A549 (cell line): ENCODE measurements at regions of chr11 and their contacts with region 1.

Region 1: GRCh38 chr11:69909561-69910496 is 90.6 kb upstream of the FGF3 start:
- DNase-seq: no peak
- ATAC-seq: peak in 1 of 2 experiments; percentile 68; a peak in 3 of 6 replicates
- H3K4me3 ChIP-seq: no peak overlapping the region
- H3K27ac ChIP-seq: peak overlapping the region in 1 of 2 experiments; percentile 23; a peak in 1 of 6 replicates
- H3K4me1 ChIP-seq: peaks cover 20% of the 10 kb centered on the region
- CTCF ChIP-seq: peak; percentile 84
- EP300 ChIP-seq: no peak
- POLR2A ChIP-seq: no peak
- RAD21 ChIP-seq: peak; percentile 32; a peak in 3 of 5 replicates

Region 2: DNA sequence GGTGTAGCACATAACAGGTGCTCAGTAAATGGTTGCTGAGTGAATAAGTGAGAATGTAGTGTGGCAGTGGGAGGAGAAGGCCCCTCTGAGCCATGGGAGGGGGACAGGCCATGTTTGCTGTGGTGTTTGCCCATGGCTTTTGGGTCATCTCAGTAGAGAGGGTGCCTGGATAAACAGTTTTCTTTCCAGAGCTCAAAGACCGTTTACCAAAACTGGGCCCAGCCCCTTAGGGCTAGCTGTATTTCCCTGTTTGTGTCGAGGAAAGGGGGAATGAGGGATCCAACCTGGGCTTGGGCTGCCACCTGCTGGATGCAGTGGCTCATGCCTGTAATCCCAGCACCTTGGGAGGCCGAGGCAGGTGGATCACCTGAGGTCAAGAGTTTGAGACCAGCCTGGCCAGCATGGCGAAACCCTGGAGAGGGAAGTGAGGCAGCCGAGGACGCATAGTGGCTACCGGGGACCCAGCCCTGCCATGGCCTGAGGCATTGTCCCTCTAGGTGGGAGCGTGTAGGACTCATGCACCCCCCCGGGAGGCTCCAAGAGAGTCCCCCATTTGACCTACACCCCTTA is 226.0 kb before region 1 on chr11:
- CTCF ChIA-PET with region 1: interaction called, 38 read pairs
- POLR2A ChIA-PET with region 1: no interaction called
- DNase-seq: peak in 1 of 2 experiments; percentile 64
- ATAC-seq: peak in 1 of 2 experiments; percentile 75; a peak in 3 of 6 replicates
- H3K4me3 ChIP-seq: no peak overlapping the region
- H3K27ac ChIP-seq: no peak overlapping the region
- H3K4me1 ChIP-seq: peaks cover 12% of the 10 kb centered on the region; the same call in 2 of the 3 replicates
- CTCF ChIP-seq: peak; percentile 66
- EP300 ChIP-seq: no peak
- POLR2A ChIP-seq: no peak
- RAD21 ChIP-seq: peak; percentile 77 to 89

Region 3: DNA sequence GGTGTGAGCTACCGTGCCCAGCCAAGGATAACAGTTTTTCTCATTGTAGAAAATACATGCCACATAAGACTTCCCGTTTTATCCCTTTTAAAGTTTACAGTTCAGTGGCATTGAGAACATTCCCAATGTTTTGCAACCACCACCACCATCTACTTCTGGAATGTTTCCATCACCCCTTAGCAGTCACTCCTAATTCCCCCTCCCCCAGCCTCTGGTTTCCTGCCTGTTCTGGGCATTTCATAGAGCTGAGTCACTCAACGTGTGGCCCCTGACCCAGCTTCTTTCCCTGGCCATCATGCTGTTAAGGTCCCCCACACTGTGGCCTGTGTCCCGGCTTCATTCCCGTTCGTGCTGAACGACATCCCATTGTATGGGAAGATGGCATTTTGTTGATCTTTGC is 165.4 kb before region 1 on chr11:
- CTCF ChIA-PET with region 1: no interaction called
- POLR2A ChIA-PET with region 1: no interaction called
- DNase-seq: peak in 1 of 2 experiments; percentile 16
- ATAC-seq: peak in 1 of 2 experiments; percentile 26; a peak in 1 of 6 replicates
- H3K4me3 ChIP-seq: no peak overlapping the region
- H3K27ac ChIP-seq: 0 out of 6 replicates have a peak overlapping the region, but pooled peaks of 1 of the 2 experiments have one; percentile 2
- H3K4me1 ChIP-seq: peaks cover 7% of the 10 kb centered on the region; the same call in 1 of the 3 replicates
- CTCF ChIP-seq: no peak
- EP300 ChIP-seq: no peak
- POLR2A ChIP-seq: no peak
- RAD21 ChIP-seq: no peak

Region 4: DNA sequence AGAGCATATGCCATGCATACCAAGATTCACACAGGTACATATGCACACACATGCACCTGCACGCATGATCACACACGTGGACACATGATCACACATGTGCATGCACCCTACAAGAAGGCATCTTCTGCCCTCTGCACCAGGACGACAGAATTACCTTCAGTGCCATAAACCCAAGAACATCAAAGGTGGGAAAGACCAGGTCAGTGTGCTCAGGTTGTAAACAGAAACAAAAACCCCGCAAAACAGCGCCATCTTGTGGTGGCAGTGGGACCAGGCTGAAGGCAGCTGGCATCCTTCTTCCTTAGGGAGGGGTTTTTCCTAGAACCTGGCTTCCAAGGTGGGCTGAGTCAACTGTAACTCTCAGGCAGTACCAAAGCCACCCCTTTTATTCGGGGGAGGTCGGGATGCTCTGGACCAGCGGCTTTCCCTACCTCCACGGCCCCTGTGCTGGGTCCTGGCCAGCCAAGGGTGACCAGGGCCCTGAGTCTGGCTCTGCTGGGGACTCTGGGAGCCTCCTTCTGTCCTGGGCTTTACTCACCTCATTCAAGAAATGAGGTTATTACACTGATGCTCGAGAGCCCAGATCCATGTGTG is 21.2 kb before region 1 on chr11:
- CTCF ChIA-PET with region 1: interaction called, 17 read pairs
- POLR2A ChIA-PET with region 1: no interaction called
- DNase-seq: peak; percentile 68 to 86
- ATAC-seq: peak; percentile 79 to 87
- H3K4me3 ChIP-seq: no peak overlapping the region
- H3K27ac ChIP-seq: no peak overlapping the region
- H3K4me1 ChIP-seq: no peaks in the 10 kb centered on the region
- CTCF ChIP-seq: peak; percentile 93
- EP300 ChIP-seq: no peak
- POLR2A ChIP-seq: no peak
- RAD21 ChIP-seq: peak; percentile 73 to 82

Region 5: GRCh38 chr11:69925366-69926196 is 15.8 kb after region 1 on chr11:
- CTCF ChIA-PET with region 1: interaction called, 60 read pairs
- POLR2A ChIA-PET with region 1: no interaction called
- DNase-seq: no peak
- ATAC-seq: no peak
- H3K4me3 ChIP-seq: no peak overlapping the region
- H3K27ac ChIP-seq: no peak overlapping the region
- H3K4me1 ChIP-seq: no peaks in the 10 kb centered on the region
- CTCF ChIP-seq: no peak
- EP300 ChIP-seq: no peak
- POLR2A ChIP-seq: no peak
- RAD21 ChIP-seq: no peak

Region 6: DNA sequence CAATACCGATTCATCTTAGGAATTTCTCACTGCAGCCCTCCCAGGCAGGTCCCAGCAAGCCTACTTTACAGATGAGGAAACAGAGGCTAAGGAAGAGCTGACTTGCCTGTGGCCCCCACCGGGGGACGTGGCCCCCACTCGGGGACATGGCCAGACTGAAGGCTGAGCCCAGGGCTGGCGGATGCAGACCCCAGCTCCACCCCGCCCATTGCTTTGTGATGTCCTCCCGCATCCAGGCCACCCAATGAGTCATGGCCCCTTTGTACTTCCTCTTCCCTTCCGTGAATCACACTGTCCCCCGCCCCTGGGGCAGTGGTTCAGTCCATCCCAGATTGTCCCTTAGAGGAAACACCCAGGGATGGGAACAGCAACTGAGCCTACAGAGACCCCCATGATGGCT is 52.3 kb after region 1 on chr11:
- CTCF ChIA-PET with region 1: interaction called, 11 read pairs
- POLR2A ChIA-PET with region 1: no interaction called
- DNase-seq: peak; percentile 59 to 67
- ATAC-seq: peak; percentile 48 to 68; a peak in 3 of 6 replicates
- H3K4me3 ChIP-seq: no peak overlapping the region
- H3K27ac ChIP-seq: peak overlapping the region; percentile 40 to 52; a peak in 4 of 6 replicates
- H3K4me1 ChIP-seq: peaks cover 16% of the 10 kb centered on the region; the same call in 2 of the 3 replicates
- CTCF ChIP-seq: no peak
- EP300 ChIP-seq: no peak
- POLR2A ChIP-seq: no peak
- RAD21 ChIP-seq: no peak

Region 7: DNA sequence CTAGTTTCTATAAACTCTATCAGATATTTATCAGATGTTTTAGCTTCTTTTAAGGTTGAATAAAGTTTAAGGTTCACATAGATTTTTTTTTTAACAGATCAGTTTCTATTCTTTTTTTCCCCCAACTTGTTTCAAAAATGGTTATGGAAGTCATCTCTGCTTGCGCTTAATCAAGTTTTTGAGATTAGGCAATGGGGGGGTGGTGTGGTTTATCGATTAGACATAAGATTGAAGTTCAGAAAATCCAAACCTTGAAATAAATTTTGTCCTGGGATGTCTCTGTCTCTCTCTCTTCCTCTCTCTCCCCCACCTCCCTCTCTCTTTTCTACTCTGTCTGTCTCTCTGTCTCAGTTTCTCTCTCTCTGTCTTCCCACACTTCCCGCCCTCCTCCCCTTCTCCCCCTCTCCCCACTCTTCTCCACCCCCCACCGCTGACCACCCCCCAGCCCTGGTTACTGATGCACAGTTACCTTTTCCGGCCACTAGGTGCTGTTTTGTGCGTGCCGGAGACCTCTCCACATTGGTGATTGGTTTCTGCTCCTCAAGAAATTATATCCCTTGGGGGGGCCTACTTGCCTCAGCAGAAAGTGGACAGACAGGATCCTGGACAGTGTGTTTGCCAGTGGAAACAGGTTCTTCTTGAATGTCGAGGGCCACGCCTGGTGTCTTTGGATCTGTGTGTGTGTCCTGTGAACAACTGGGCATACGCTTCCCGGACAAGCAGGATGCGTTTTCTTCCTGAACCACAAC is 138.6 kb after region 1 on chr11:
- CTCF ChIA-PET with region 1: no interaction called
- POLR2A ChIA-PET with region 1: no interaction called
- DNase-seq: peak; percentile 10 to 40
- ATAC-seq: peak; percentile 62 to 80; a peak in 3 of 6 replicates
- H3K4me3 ChIP-seq: no peak overlapping the region
- H3K27ac ChIP-seq: no peak overlapping the region
- H3K4me1 ChIP-seq: no peaks in the 10 kb centered on the region
- CTCF ChIP-seq: no peak; the same call in 2 of the 3 replicates
- EP300 ChIP-seq: no peak
- POLR2A ChIP-seq: no peak
- RAD21 ChIP-seq: peak in 1 of 2 experiments; percentile 22; a peak in 1 of 5 replicates

Region 8: DNA sequence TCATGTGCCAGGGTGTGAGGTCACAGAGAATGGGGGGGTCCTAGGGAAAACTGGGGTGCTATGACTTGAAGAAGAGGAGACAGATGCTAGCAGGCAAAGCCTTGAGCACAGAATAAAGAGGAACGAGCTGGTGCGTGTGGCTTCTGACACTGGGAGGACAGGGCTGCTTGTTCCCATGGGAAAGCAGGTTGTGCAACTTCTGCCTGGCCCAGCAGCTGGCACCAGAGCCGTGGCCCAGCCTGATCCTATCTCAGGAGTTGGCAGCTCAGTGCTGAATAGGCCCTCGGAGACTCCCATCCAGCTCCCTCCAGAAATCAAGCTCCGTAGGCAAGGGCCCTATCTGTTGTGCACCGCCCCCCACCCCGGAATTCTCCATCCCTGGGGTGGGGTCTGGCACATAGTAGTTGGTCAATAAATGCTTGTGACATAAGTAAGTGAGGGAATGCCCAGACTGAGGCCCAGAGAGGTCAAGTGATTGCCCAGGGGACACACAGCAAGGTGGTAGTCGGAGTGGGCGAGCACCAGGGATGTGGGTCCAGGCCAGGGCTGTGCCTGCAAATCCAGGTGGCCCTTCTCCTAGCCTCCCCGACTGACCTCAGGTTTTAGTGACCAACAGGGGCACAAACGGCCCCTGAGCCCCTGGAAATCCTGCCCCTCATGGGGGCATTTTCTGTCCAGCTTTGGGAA is 273.8 kb after region 1 on chr11:
- CTCF ChIA-PET with region 1: interaction called, 29 read pairs
- POLR2A ChIA-PET with region 1: no interaction called
- DNase-seq: no peak
- ATAC-seq: no peak
- H3K4me3 ChIP-seq: no peak overlapping the region
- H3K27ac ChIP-seq: no peak overlapping the region
- H3K4me1 ChIP-seq: no peaks in the 10 kb centered on the region
- CTCF ChIP-seq: no peak
- EP300 ChIP-seq: no peak
- POLR2A ChIP-seq: no peak
- RAD21 ChIP-seq: no peak